ENCODE measurements at regions of chr16 and their contacts with region 1.

Region 1: GRCh38 chr16:31868691-31869167 is 4.9 kb upstream of the ZNF267 start:
- DNase-seq: peak; percentile 90
- ATAC-seq: peak; percentile 54
- H3K4me3 Mint-ChIP-seq: peak overlapping the region; percentile 63
- H3K27ac Mint-ChIP-seq: peak overlapping the region; percentile 91
- H3K4me1 Mint-ChIP-seq: peaks cover 55% of the 10 kb centered on the region
- H3K27me3 Mint-ChIP-seq: no peaks in the 10 kb centered on the region

Region 2: DNA sequence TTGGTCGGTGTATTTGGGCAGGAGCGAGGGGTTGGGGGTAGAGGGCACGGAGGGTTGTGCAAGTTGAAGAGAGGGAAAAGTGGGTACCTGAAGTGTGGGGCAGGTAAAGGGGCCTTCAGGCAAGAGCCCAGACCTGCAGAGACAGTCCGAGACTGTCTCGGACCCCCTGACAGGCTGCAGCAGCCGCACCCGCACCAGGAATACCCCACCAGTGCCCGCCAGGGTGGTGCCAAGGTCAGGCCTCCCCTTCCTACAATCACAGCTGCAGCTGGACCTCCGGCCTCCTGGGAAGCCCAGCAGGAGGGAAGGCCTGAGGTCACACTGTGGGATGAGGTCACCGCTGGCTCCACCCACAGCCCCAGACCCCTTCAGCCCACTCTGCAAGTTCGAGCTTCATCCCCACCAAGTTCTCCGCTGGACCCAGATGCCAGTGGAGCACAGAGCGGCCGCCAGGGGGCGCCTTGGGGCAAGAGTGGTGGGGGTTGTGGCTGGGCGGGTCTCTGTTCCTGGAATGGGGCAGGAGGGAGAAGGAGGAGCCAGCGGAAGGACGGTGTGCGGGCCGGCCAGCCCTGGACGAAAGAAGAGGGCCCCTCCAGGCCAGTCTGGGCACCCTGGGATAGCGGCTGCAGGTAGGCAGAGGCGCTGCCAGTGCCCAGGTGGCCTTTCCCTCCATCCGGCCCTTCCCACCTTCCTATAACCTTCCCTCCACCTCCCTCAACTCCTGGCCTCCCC is 883.9 kb before region 1 on chr16 and contains the start of gene HSD3B7:
- CTCF ChIA-PET with region 1: interaction called, 10 read pairs
- POLR2A ChIA-PET with region 1: no interaction called
- intact Hi-C with region 1: loop called (anchors 1 to 10 kb)
- DNase-seq: peak; percentile 91
- ATAC-seq: peak; percentile 92
- H3K4me3 Mint-ChIP-seq: no peak within 1 kb of the TSS
- H3K27ac Mint-ChIP-seq: peak within 1 kb of the TSS; percentile 31
- H3K4me1 Mint-ChIP-seq: peaks cover 3% of the 10 kb centered on the region
- H3K27me3 Mint-ChIP-seq: no peaks in the 10 kb centered on the region
- total RNA-seq, gene HSD3B7: 1.6 to 2.2 TPM

Region 3: DNA sequence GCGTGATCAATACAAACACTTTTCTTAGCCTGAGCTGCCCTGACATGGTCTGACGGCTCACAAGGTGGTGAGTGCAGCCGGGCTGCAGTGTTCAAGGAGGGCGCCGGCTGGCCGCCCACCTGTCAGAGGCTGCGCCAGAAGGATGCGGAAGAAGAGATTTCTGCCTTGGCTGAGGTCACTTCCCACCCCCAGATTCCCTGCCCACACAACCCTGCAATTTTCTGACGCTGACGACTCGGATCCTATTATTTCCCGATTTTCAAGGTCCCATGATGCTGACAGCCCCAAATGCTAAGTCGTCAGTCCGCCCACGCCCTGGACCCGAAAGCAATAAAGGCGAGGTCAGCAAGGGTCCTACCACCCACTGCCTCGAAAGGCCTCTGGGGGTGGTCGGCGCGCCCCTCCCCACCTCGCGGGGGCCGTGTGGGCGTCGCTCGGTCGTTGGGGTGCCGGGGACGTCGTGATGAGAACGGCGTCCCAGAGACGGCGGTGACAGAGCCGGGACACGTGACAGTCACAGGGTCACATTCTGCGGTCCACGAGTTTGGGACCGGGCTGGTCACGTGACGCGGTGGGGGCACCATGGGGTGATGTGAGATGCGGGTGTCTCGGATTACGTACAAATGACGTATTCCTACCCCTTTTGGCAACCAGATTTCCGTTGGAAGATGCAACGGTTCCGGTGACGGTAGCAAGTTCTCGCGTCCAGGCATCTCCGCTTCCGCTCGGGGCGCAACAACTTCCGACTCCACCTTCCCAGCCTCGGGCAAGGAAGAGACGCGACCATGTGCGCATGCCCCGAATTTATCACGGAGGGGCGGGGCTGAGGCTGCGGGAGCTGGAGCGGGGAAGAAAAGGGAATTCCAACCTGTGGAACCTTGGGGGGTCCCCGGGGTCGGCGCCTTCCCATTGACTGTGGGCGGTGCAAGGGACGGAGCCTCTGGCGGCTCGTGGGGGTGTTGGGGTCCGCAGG is 835.7 kb before region 1 on chr16 and contains the start of gene STX4:
- CTCF ChIA-PET with region 1: no interaction called
- POLR2A ChIA-PET with region 1: no interaction called
- intact Hi-C with region 1: loop called in 1 of 2 experiments (anchors 5 kb)
- DNase-seq: peak; percentile 99
- ATAC-seq: peak; percentile 89
- H3K4me3 Mint-ChIP-seq: peak within 1 kb of the TSS; percentile 96
- H3K27ac Mint-ChIP-seq: peak within 1 kb of the TSS; percentile 93
- H3K4me1 Mint-ChIP-seq: peaks cover 15% of the 10 kb centered on the region
- H3K27me3 Mint-ChIP-seq: no peaks in the 10 kb centered on the region
- total RNA-seq, gene STX4: 29.2 to 35.9 TPM

Region 4: GRCh38 chr16:31084616-31085260 is 784.0 kb before region 1 on chr16:
- CTCF ChIA-PET with region 1: no interaction called
- POLR2A ChIA-PET with region 1: no interaction called
- intact Hi-C with region 1: no loop called
- DNase-seq: no peak
- ATAC-seq: no peak
- H3K4me3 Mint-ChIP-seq: no peak overlapping the region
- H3K27ac Mint-ChIP-seq: no peak overlapping the region
- H3K4me1 Mint-ChIP-seq: peaks cover 8% of the 10 kb centered on the region
- H3K27me3 Mint-ChIP-seq: no peaks in the 10 kb centered on the region

Region 5: GRCh38 chr16:31168848-31169247 is 699.9 kb before region 1 on chr16:
- CTCF ChIA-PET with region 1: no interaction called
- POLR2A ChIA-PET with region 1: no interaction called
- intact Hi-C with region 1: no loop called
- DNase-seq: no peak
- ATAC-seq: no peak
- H3K4me3 Mint-ChIP-seq: no peak overlapping the region
- H3K27ac Mint-ChIP-seq: no peak overlapping the region
- H3K4me1 Mint-ChIP-seq: no peaks in the 10 kb centered on the region
- H3K27me3 Mint-ChIP-seq: no peaks in the 10 kb centered on the region

Region 6: DNA sequence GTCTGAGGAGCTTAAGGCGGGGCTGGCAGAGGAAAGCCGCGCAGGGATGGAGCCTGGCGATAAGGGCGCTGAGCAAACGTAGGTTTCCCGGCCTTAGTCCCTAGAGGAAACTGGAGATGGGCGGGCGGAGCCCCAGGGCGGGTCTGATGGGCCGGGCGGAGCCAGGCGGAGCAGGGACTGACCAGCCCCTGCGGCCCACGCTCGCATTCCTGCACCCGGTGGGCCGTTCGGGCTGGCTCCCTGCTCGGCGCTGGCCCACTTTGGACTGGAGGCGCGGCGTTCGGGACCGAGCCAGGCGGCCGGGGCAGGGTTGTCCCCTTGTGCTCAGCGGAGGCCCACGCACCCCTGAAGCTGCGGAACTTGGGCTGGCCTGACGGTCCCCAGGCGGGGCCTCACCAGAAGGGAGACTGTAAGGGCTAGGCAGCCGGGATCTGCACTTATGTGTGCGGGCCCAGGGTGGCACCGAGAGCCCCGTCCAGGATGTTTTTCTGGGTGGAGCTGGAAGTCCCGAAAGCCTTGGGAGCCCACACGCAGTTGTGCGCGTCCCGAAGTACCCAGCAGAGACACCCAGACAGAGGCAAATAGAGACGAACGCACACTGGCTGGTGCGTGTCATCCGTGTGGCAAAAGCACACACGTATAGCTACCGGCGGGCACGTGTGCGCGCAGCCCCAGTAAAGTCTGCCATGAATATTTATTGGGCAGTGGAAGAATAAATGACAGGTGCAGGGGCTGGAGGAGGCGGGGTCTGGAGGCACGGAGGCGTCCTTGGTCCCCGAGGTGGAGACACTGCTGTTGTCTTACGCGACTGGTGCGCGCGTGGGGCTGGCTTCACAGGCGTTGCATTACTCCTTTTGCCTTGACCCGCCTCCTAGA is 653.2 kb before region 1 on chr16:
- CTCF ChIA-PET with region 1: interaction called, 3 read pairs
- POLR2A ChIA-PET with region 1: no interaction called
- intact Hi-C with region 1: loop called in 1 of 2 experiments (anchors 10 kb)
- DNase-seq: peak; percentile 45
- ATAC-seq: peak; percentile 45
- H3K4me3 Mint-ChIP-seq: peak overlapping the region; percentile 52
- H3K27ac Mint-ChIP-seq: no peak overlapping the region
- H3K4me1 Mint-ChIP-seq: peaks cover 23% of the 10 kb centered on the region
- H3K27me3 Mint-ChIP-seq: peaks cover 44% of the 10 kb centered on the region

Region 7: GRCh38 chr16:31382485-31383161 is 486.1 kb before region 1 on chr16:
- CTCF ChIA-PET with region 1: no interaction called
- POLR2A ChIA-PET with region 1: interaction called, 5 read pairs
- intact Hi-C with region 1: loop called in 1 of 2 experiments (anchors 5 kb)
- DNase-seq: peak; percentile 85
- ATAC-seq: peak; percentile 63
- H3K4me3 Mint-ChIP-seq: no peak overlapping the region
- H3K27ac Mint-ChIP-seq: no peak overlapping the region
- H3K4me1 Mint-ChIP-seq: peaks cover 25% of the 10 kb centered on the region
- H3K27me3 Mint-ChIP-seq: peaks cover 9% of the 10 kb centered on the region

Region 8: DNA sequence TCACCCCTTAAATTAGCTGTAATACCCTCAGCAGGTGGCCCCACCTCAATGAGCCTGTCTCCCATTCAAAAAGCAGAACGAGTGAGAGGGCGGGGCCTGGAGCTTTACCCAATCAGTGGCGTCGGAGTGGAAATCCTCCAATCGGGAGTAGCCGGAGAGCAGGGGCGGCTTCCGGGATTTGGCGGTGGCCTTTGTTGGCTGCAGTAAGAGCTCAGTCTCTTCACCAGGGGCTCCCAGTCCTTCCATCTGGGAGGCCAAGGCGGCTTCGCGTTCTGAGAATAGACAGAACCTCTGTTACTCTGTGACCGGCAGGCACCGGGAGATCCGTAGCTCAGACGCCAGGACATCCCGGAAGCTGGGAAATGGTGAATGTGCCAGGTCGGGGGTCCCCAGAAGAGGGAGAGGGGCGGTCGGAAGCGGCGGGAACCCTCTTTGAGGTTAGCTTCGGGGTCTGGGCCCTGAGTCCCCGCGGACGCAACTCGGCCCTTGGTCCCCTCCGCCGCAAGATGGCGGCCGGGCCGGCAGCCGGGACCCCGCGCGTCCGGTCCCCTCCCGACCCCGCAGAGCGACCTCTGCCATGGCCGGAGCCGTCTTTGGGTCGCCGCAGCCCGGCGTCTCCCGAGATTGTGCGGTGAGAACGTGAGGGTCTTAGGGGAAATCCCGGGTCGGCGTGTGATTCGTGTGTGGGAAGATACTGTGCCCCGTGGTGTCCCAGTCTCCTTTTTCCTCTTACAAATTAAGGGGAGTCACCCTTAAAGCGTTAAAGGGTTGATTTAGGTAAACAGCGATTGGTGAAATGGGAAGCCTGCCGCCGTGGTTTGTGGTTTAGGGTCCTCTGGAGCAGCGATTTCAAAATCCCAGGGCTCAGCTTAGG is 155.4 kb before region 1 on chr16:
- CTCF ChIA-PET with region 1: interaction called, 14 read pairs
- POLR2A ChIA-PET with region 1: interaction called, 10 read pairs
- intact Hi-C with region 1: loop called in 1 of 2 experiments (anchors 2 kb)
- DNase-seq: peak; percentile 95
- ATAC-seq: peak; percentile 91
- H3K4me3 Mint-ChIP-seq: peak overlapping the region; percentile 96
- H3K27ac Mint-ChIP-seq: peak overlapping the region; percentile 99
- H3K4me1 Mint-ChIP-seq: peaks cover 47% of the 10 kb centered on the region
- H3K27me3 Mint-ChIP-seq: no peaks in the 10 kb centered on the region

Region 9: DNA sequence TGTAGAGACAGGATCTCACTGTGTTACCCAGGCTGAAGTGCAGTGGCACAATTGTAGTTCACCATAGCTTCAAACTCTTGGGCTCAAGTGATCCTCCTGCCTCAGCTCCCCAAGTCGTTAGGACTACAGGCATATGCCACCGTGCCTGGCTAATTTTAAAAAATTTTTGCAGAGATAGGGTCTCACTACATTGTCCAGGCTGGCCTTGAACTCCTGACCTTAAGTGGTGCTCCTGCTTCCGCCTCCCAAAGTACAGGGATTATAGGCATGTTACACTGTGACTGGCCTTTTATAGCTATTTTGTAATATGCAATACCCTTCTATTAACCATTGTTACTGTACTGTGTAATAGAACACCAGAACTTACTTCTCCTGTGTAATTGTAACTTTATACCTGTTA is 134.5 kb before region 1 on chr16:
- CTCF ChIA-PET with region 1: no interaction called
- POLR2A ChIA-PET with region 1: no interaction called
- intact Hi-C with region 1: no loop called
- DNase-seq: no peak
- ATAC-seq: no peak
- H3K4me3 Mint-ChIP-seq: no peak overlapping the region
- H3K27ac Mint-ChIP-seq: no peak overlapping the region
- H3K4me1 Mint-ChIP-seq: no peaks in the 10 kb centered on the region
- H3K27me3 Mint-ChIP-seq: no peaks in the 10 kb centered on the region

Measured in activated CD4-positive, alpha-beta T cell treated with anti-CD3 and anti-CD28 coated beads for 36 hours (primary cell).